ENCODE measurements at regions of chr12 and their contacts with region 1.

Region 1: GRCh38 chr12:27652174-27652763 is 44.0 kb upstream of the REP15 start:
- DNase-seq: no peak
- ATAC-seq: peak; percentile 79
- H3K4me3 ChIP-seq: no peak overlapping the region
- H3K27ac ChIP-seq: no peak overlapping the region
- H3K4me1 ChIP-seq: no peaks in the 10 kb centered on the region
- H3K27me3 ChIP-seq: no peaks in the 10 kb centered on the region

Region 2: GRCh38 chr12:27083861-27084394 is 568.3 kb before region 1 on chr12:
- intact Hi-C with region 1: no loop called
- DNase-seq: peak in 1 of 2 donors; percentile 51
- ATAC-seq: peak; percentile 36
- H3K4me3 ChIP-seq: no peak overlapping the region
- H3K27ac ChIP-seq: no peak overlapping the region
- H3K4me1 ChIP-seq: peaks cover 2 to 6% of the 10 kb centered on the region in 2 donors
- H3K27me3 ChIP-seq: no peaks in the 10 kb centered on the region

Region 3: GRCh38 chr12:27424631-27425230 is 227.5 kb before region 1 on chr12:
- intact Hi-C with region 1: loop called in 1 of 2 experiments (anchors 5 kb)
- DNase-seq: no peak
- ATAC-seq: peak; percentile 60
- H3K4me3 ChIP-seq: no peak overlapping the region
- H3K27ac ChIP-seq: peak overlapping the region; percentile 36 to 80
- H3K4me1 ChIP-seq: peaks cover 0 to 2% of the 10 kb centered on the region in 2 donors
- H3K27me3 ChIP-seq: no peaks in the 10 kb centered on the region

Region 4: GRCh38 chr12:27434673-27435565 is 217.3 kb before region 1 on chr12:
- intact Hi-C with region 1: loop called in 1 of 2 experiments (anchors 5 kb)
- DNase-seq: no peak
- ATAC-seq: no peak
- H3K4me3 ChIP-seq: no peak overlapping the region
- H3K27ac ChIP-seq: peak overlapping the region in 1 of 2 donors; percentile 54
- H3K4me1 ChIP-seq: no peaks in the 10 kb centered on the region
- H3K27me3 ChIP-seq: no peaks in the 10 kb centered on the region

Region 5: GRCh38 chr12:27530157-27530922 is 121.9 kb before region 1 on chr12:
- intact Hi-C with region 1: loop called in 1 of 2 experiments (anchors 1 kb)
- DNase-seq: no peak
- ATAC-seq: no peak
- H3K4me3 ChIP-seq: no peak overlapping the region
- H3K27ac ChIP-seq: peak overlapping the region in 1 of 2 donors; percentile 57
- H3K4me1 ChIP-seq: peaks cover 3 to 16% of the 10 kb centered on the region in 2 donors
- H3K27me3 ChIP-seq: no peaks in the 10 kb centered on the region

Measured in aorta (tissue), 5 donors.